Heart right ventricle (tissue), 16 donors: ENCODE measurements at regions of chr6 and their contacts with region 1.

Region 1: DNA sequence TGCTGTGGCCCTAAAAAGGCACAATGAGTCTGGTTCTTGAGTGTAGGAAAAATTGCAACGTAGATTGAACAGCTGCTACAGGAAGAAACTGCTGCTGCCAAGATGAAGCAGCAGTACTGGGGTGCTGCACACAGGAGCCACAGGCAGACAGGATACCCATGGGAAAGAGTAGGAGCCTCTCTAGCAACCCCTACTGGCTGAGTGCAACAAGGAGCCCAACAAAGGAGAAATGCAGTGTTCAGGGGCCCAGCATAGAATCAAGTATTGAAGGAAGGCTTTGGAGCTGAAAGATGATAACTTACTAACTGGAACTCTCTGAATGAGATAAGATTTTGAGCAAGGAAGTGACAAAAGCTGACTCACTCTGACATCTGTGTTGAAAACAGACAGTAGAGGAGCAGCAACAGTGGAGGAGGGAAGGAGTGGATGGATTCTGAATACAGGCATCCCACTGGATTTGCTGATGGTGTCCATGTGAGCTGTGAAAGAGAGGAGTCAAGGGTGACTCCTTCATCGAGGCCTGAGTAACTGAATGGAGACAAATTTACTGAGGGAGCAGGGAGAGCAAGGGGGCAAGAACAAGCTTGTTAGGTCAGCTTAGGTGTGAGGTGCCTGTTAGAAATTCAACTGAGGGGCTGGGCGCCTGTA is 534.7 kb upstream of the JARID2 start:
- DNase-seq: peak in 1 of 2 donors; percentile 49
- ATAC-seq: peak in 1 of 8 donors; percentile 12
- H3K4me3 ChIP-seq: no peak overlapping the region
- H3K27ac ChIP-seq: peak overlapping the region in 1 of 10 donors; percentile 73
- H3K4me1 ChIP-seq: peaks cover 7 to 49% (median 32%) of the 10 kb centered on the region in 9 donors
- H3K27me3 ChIP-seq: no peaks in the 10 kb centered on the region
- CTCF ChIP-seq: peak; percentile 22 to 73 (median 46)

Region 2: DNA sequence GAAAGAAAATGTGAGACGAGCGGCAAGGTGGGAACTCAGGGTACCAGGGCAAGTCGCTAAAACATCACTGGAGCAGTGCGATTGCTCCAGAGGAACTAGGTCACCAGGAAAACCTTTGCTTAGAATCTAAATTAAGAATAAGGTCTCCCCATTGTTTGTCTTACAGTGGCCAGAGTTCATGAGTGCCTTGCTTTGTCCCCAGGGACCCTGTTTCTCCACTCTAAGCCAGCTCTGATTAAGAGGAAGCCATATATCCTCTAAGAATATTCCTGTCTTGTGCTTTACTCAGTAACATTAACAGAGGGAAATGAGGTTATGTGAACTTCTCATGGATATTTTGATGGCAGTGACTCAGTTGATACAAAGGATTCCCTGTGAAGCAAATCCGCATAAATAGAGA is 287.9 kb before region 1 on chr6:
- intact Hi-C with region 1: loop called in 2 of 10 experiments (anchors 10 kb)
- DNase-seq: peak in 1 of 2 donors; percentile 75
- ATAC-seq: peak; percentile 91 to 98 (median 94)
- H3K4me3 ChIP-seq: no peak overlapping the region
- H3K27ac ChIP-seq: peak overlapping the region in 6 of 10 donors; percentile 22 to 75 (median 60)
- H3K4me1 ChIP-seq: peaks cover 0 to 26% (median 8%) of the 10 kb centered on the region in 9 donors
- H3K27me3 ChIP-seq: no peaks in the 10 kb centered on the region
- CTCF ChIP-seq: no peak

Region 3: GRCh38 chr6:14472986-14473337 is 238.2 kb before region 1 on chr6:
- intact Hi-C with region 1: no loop called
- DNase-seq: peak in 1 of 2 donors; percentile 16
- ATAC-seq: peak in 1 of 8 donors; percentile 5
- H3K4me3 ChIP-seq: no peak overlapping the region
- H3K27ac ChIP-seq: no peak overlapping the region
- H3K4me1 ChIP-seq: peaks cover 0 to 30% (median 17%) of the 10 kb centered on the region in 9 donors
- H3K27me3 ChIP-seq: no peaks in the 10 kb centered on the region
- CTCF ChIP-seq: no peak

Region 4: DNA sequence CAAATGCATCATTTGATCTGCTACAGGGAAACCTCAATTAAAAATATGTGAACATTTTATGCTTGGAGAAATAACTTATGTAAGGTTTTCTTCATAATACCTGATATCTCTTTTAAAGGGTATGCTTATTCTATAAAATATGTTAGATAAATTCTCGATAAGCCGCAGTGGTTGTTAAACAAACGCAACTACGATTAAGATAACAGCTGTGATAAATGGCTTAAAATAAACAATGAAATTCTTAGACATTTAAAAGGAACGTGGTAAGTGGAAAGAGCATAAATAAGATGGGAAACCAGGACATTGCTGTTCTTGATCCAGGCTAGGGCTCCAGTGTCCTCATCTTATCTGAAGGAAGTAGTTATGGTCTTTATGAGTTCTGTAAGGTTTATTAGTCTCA is 177.7 kb before region 1 on chr6:
- intact Hi-C with region 1: loop called in 1 of 10 experiments (anchors 10 kb)
- DNase-seq: no peak
- ATAC-seq: no peak
- H3K4me3 ChIP-seq: no peak overlapping the region
- H3K27ac ChIP-seq: no peak overlapping the region
- H3K4me1 ChIP-seq: peaks cover 0 to 12% (median 0%) of the 10 kb centered on the region in 9 donors
- H3K27me3 ChIP-seq: no peaks in the 10 kb centered on the region
- CTCF ChIP-seq: no peak

Region 5: DNA sequence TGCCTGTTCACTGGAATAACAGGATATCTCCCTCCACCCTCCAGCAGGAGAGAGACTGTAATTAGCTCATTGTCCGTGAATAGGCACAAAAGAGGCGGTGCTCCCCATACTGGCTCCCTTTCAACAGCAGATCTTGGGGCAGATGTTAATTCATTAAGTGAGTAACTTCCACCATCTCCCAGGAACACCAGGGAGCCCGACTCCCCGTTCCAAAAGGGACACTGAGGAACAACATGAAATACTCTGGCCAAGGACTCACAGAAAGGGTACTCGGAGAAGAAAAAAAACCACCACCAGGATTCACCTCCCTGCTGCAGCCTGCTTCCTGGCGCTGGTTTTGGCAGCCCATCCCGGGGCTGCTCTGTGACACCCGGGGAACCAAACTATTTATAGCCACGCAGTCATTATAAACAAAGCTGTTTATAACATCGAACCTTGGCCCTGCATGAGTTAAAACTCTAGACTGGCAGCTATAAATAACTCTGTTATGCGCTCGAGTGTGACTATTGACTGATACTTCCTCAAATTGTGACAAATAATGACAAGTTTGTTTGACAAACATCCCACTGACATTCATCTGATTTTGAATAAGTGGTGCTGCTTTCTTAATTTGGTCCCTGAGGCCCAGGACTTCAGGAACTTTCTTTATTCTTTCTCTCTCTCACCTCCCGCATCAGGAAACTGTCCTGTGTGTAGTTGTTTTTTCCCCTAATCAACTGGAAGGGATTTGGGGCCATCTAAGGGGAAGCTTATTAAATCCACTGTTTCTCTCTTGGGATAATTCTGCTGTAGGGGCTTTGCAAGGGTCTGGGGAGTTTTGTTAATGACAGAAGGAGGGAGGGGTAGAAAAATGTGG is 72.0 kb before region 1 on chr6:
- intact Hi-C with region 1: loop called in 2 of 10 experiments (anchors 5 kb)
- DNase-seq: peak; percentile 67 to 79
- ATAC-seq: peak; percentile 91 to 96 (median 94)
- H3K4me3 ChIP-seq: peak overlapping the region in 9 of 10 donors; percentile 7 to 45 (median 35)
- H3K27ac ChIP-seq: peak overlapping the region; percentile 48 to 90 (median 79)
- H3K4me1 ChIP-seq: peaks cover 0 to 67% (median 35%) of the 10 kb centered on the region in 9 donors
- H3K27me3 ChIP-seq: no peaks in the 10 kb centered on the region
- CTCF ChIP-seq: peak in 5 of 9 donors; percentile 8 to 30 (median 20)

Region 6: DNA sequence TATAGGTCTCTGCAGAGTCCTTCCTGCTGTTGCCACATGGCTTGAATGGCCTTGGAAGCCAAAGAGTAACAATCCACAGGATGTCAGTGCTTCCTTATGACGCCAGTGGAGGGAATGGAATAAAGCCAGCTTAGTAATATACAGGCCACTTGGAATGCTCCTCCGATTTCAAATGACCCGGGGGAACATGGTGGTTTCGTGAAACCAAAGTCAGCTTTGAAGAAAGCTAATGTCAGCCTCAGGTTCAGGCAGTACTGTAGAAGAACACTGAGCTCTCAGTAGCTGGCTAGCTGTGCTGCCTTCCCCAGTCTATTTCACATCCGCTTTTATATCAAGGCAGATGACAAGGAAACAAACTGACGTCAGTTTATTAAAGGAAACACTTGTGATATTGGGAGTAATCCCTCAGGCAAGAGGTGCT is 762.6 kb after region 1 on chr6:
- intact Hi-C with region 1: loop called in 1 of 10 experiments (anchors 10 kb)
- DNase-seq: peak in 1 of 2 donors; percentile 60
- ATAC-seq: peak; percentile 65 to 92 (median 78)
- H3K4me3 ChIP-seq: no peak overlapping the region
- H3K27ac ChIP-seq: peak overlapping the region; percentile 24 to 80 (median 72)
- H3K4me1 ChIP-seq: peaks cover 17 to 80% (median 57%) of the 10 kb centered on the region in 9 donors
- H3K27me3 ChIP-seq: no peaks in the 10 kb centered on the region
- CTCF ChIP-seq: no peak